ENCODE measurements at regions of chr20 and their contacts with region 1.

Region 1: GRCh38 chr20:39829256-39829655 is 859.8 kb downstream of the MAFB start:
- DNase-seq: peak; percentile 41
- ATAC-seq: no peak
- H3K4me3 ChIP-seq: no peak overlapping the region
- H3K27ac ChIP-seq: no peak overlapping the region
- H3K4me1 ChIP-seq: no peaks in the 10 kb centered on the region
- H3K27me3 ChIP-seq: peaks cover 17% of the 10 kb centered on the region
- CTCF ChIP-seq: peak; percentile 73
- POLR2A ChIP-seq: no peak
- RAD21 ChIP-seq: peak; percentile 83

Region 2: DNA sequence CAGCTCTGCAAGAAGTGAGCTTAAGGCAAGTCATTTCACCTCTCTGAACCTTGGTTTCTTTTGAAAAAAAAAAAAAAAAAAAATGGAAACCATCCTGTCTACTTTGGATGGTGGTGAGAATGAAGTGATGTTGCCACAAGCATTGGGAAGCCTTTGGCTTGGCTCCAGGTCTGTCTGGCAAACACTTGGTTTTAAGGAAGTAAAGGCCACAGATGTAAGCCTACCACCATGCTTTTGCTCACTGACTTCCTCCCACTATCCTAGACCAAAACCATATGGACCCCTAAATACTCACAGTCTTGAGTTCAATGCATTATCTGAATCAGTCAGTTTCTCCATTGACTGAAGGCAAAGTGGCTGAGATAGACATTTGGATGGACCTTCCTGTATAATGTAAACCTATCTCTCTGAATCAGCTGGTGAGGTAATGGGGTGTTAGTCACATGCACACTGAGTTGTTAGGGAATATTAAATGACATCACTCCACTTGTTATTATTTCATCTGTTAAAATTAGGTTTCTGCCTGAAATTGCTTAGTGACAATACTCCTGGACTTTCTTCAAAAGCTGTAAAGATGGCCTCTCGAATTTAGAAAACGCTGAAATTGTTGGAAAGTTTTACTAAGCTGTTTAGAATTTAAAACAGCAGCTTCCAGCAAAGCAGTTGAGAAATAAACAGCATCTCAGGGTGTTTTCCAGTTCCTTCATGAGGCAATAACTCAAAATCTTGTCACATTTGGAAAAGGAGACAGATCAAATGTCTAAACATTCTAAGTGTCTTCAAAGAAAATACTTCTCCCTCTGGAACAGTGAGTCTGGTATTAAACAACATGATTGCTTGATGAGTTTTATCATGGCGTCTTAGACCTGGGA is 33.6 kb before region 1 on chr20:
- CTCF ChIA-PET with region 1: no interaction called
- POLR2A ChIA-PET with region 1: no interaction called
- dilution Hi-C with region 1: no loop called
- in situ Hi-C with region 1: no loop called
- intact Hi-C with region 1: no loop called
- DNase-seq: peak; percentile 47
- ATAC-seq: no peak
- H3K4me3 ChIP-seq: no peak overlapping the region
- H3K27ac ChIP-seq: no peak overlapping the region
- H3K4me1 ChIP-seq: no peaks in the 10 kb centered on the region
- H3K27me3 ChIP-seq: no peaks in the 10 kb centered on the region
- CTCF ChIP-seq: no peak
- POLR2A ChIP-seq: no peak
- RAD21 ChIP-seq: no peak

Region 3: GRCh38 chr20:39849664-39850063 is 20.4 kb after region 1 on chr20:
- CTCF ChIA-PET with region 1: interaction called, 10 read pairs
- POLR2A ChIA-PET with region 1: no interaction called
- dilution Hi-C with region 1: no loop called
- in situ Hi-C with region 1: no loop called
- intact Hi-C with region 1: no loop called
- DNase-seq: peak; percentile 94
- ATAC-seq: peak; percentile 83
- H3K4me3 ChIP-seq: no peak overlapping the region
- H3K27ac ChIP-seq: no peak overlapping the region
- H3K4me1 ChIP-seq: peaks cover 33% of the 10 kb centered on the region
- H3K27me3 ChIP-seq: peaks cover 6% of the 10 kb centered on the region; the same call in 1 of the 2 replicates
- CTCF ChIP-seq: no peak
- POLR2A ChIP-seq: no peak
- RAD21 ChIP-seq: peak; percentile 29

Measured in IMR-90 (cell line).